Calu3 (cell line): ENCODE measurements at regions of chr10 and their contacts with region 1.

Region 1: GRCh38 chr10:29735596-29736318 is 101.0 kb upstream of the SVIL start:
- DNase-seq: peak; percentile 97
- H3K4me3 Mint-ChIP-seq: peak overlapping the region; percentile 89
- H3K27ac Mint-ChIP-seq: peak overlapping the region; percentile 82
- H3K4me1 Mint-ChIP-seq: peaks cover 36% of the 10 kb centered on the region
- H3K27me3 Mint-ChIP-seq: no peaks in the 10 kb centered on the region
- CTCF ChIP-seq: peak; percentile 87

Region 2: GRCh38 chr10:29535012-29535777 is 200.6 kb before region 1 on chr10:
- CTCF ChIA-PET with region 1: no interaction called
- intact Hi-C with region 1: loop called (anchors 10 kb)
- DNase-seq: peak; percentile 93
- H3K4me3 Mint-ChIP-seq: peak overlapping the region; percentile 62
- H3K27ac Mint-ChIP-seq: peak overlapping the region; percentile 90
- H3K4me1 Mint-ChIP-seq: peaks cover 52% of the 10 kb centered on the region
- H3K27me3 Mint-ChIP-seq: no peaks in the 10 kb centered on the region
- CTCF ChIP-seq: peak; percentile 74

Region 3: DNA sequence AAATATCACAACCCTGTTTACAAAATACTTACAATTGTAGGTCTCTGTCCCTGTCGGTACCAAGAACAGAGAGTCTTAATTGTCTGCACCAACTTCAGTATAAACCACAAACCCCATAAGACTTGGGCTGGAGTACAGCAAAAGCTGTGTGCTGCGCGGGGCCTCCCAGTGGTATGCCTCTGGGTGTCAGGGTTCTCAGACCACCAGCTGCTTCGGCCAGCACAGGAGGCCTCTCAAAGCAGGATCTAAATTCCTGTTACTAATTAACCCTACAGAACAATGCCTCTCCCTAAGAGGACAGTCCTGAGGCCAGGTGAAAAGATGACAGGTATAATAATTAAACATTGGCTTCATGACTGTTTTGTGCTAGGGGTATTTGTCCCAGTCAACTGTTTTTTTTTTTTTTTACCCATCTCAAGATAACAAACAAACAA is 100.0 kb before region 1 on chr10:
- CTCF ChIA-PET with region 1: no interaction called
- intact Hi-C with region 1: loop called (anchors 5 kb)
- DNase-seq: peak; percentile 42
- H3K4me3 Mint-ChIP-seq: peak overlapping the region; percentile 28
- H3K27ac Mint-ChIP-seq: peak overlapping the region; percentile 62
- H3K4me1 Mint-ChIP-seq: peaks cover 65% of the 10 kb centered on the region
- H3K27me3 Mint-ChIP-seq: no peaks in the 10 kb centered on the region
- CTCF ChIP-seq: no peak

Region 4: GRCh38 chr10:29689001-29689400 is 46.8 kb before region 1 on chr10:
- CTCF ChIA-PET with region 1: no interaction called
- intact Hi-C with region 1: loop called (anchors 5 kb)
- DNase-seq: no peak
- H3K4me3 Mint-ChIP-seq: no peak overlapping the region
- H3K27ac Mint-ChIP-seq: no peak overlapping the region
- H3K4me1 Mint-ChIP-seq: peaks cover 52% of the 10 kb centered on the region
- H3K27me3 Mint-ChIP-seq: no peaks in the 10 kb centered on the region
- CTCF ChIP-seq: no peak

Region 5: GRCh38 chr10:29957907-29958356 is 222.2 kb after region 1 on chr10:
- CTCF ChIA-PET with region 1: no interaction called
- intact Hi-C with region 1: loop called (anchors 10 kb)
- DNase-seq: peak; percentile 68
- H3K4me3 Mint-ChIP-seq: no peak overlapping the region
- H3K27ac Mint-ChIP-seq: no peak overlapping the region
- H3K4me1 Mint-ChIP-seq: peaks cover 48% of the 10 kb centered on the region
- H3K27me3 Mint-ChIP-seq: no peaks in the 10 kb centered on the region
- CTCF ChIP-seq: no peak

Region 6: DNA sequence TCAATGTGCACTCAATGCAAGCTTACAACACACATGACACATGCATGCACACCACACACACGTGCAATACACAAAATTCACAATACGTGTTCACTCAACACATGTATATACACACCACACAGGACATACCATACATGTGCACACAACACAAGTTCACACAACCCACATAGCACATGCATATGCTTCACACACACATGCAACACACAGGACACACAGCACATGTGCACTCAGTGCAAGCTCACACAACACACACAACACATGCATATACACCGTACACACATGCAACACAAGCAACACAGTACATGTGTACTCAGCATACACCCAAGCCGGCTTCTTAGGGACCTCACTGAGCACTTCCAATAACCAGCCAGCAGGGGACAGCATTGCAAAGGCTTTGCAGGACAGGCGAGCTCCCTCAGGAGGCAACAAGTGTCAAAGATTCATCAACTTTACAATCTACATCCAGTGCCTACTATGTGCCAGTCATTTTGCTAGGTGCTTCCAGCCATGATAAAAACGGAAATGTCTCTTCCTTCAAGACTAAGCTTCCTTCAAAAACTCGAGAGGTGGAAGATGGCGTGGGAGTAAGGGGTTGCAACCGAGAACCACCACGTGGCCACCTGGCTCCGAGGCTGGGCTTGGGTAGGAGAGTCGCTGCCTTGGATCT is 262.5 kb after region 1 on chr10:
- CTCF ChIA-PET with region 1: interaction called, 6 read pairs
- intact Hi-C with region 1: loop called (anchors 5 kb)
- DNase-seq: peak; percentile 84
- H3K4me3 Mint-ChIP-seq: no peak overlapping the region
- H3K27ac Mint-ChIP-seq: no peak overlapping the region
- H3K4me1 Mint-ChIP-seq: peaks cover 55% of the 10 kb centered on the region
- H3K27me3 Mint-ChIP-seq: no peaks in the 10 kb centered on the region
- CTCF ChIP-seq: peak; percentile 93

Region 7: DNA sequence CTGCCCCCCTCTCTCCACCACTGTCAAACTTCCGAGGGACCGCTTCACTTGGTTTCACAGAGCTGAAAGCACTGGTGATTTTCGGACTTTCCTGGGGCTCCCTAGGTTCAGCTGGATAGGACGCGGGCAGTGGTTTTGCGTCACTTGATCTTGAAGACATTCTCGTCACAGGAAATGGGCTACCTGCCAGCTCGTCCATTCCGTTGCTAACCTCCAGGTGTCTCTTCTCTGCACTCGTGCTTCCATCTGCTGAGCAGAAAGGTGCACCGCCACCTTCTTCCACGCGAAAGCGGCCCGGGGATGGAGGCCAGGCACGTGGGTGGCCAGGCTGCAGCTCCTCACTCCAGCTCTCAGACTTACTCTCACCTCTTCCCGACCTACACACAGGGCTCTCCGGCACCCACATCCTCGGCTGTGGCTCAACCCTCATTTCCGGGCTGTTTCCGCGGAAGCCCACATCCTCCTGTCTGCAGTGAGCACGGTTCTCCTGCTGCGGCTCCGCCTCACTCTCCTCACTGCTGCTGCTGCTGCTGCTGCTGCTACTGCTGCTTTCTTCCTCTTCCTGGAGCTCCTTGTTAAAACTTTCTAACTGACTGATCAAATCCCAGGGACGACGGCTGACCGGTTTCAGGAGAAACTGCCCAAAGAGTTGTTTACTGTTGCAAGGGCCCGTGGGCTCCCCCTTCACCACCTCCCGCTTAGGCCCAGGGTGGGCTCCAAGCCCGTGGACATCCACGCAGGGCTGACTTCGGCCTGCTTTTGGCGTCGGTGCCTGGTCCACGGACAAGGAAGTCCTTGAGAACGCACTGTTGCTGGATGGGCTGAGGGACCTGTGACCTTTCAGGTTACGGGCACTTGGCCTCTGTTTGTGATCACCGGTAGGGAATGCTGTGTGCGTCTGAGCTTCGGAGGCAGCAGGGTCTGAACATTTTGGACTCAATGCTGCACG is 291.6 kb after region 1 on chr10:
- CTCF ChIA-PET with region 1: no interaction called
- intact Hi-C with region 1: no loop called
- DNase-seq: peak; percentile 67
- H3K4me3 Mint-ChIP-seq: peak overlapping the region; percentile 66
- H3K27ac Mint-ChIP-seq: no peak overlapping the region
- H3K4me1 Mint-ChIP-seq: peaks cover 17% of the 10 kb centered on the region
- H3K27me3 Mint-ChIP-seq: peaks cover 18% of the 10 kb centered on the region
- CTCF ChIP-seq: no peak